Pancreas (tissue), 10 donors: ENCODE measurements at regions of chr6 and their contacts with region 1.

Region 1: DNA sequence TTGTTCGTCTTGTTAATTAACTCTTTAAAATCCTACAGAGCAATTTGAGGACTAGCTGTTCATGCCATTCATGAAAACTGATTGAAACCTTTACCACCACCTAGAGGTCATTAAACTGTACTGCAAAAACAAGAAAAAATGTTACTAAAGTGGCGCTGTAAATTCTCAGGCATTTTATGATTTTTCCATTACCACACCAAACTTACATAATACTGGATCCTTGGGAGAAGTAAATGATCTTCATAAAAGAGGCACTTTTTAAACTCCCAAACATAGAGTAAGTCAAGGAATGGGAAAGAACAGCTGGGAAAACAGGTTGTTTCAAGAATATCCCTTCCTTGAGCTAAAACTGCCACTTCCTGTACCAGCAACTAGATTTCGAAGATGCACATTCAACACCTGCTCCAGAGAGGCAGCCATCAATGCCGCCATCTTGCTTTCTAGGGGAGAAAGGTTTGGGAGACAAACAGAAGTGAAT is 54.3 kb downstream of the MYLIP start:
- DNase-seq: no peak
- ATAC-seq: peak; percentile 51 to 85 (median 82)
- H3K4me3 ChIP-seq: no peak overlapping the region
- H3K27ac ChIP-seq: no peak overlapping the region
- H3K4me1 ChIP-seq: no peaks in the 10 kb centered on the region
- H3K27me3 ChIP-seq: no peaks in the 10 kb centered on the region
- CTCF ChIP-seq: peak; percentile 34 to 63 (median 53)

Region 2: DNA sequence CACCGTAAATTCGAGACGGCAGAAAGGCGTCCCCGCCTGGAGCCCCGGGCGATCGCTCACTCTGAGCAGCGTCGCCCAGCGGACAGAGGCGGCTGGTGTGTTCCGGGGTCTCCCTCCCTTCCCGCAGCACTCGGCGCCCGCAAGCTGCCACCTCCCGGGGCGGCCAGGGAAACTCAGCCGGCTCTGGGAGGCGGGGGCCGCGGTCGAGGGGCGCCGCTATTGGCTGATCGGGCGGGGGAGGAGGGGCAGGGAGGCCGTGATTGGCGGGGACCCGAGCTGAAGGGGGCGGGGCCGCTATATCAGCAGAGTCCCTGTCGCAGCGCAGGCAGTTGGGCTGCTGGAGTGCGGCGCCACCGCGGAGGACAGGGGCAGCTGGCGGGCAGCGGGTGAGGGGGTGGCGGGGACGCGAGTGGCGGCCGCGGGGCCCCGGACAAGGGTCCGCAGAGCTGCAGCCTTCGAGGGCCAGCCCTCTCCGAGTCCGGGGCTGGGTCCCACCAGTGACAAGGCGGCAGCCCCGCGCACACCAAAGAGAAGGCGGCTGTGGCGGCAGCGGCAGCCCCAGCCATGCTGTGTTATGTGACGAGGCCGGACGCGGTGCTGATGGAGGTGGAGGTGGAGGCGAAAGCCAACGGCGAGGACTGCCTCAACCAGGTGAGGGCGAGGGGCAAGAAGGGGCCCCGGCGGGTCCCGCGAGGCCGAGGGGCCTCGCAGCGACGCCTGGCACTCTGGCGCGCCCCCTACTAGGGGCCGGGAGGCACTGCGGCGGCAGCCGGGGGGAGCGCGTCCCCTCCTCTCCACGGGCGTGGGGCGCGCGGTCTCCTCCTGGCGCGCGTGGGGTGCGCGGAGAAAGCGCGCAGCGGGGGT is 54.2 kb before region 1 on chr6 and contains the start of gene MYLIP:
- intact Hi-C with region 1: loop called in 1 of 3 experiments (anchors 10 kb)
- DNase-seq: peak; percentile 98 to 99 (median 98)
- ATAC-seq: peak; percentile 89 to 96 (median 94)
- H3K4me3 ChIP-seq: peak within 1 kb of the TSS; percentile 51 to 98 (median 95)
- H3K27ac ChIP-seq: peak within 1 kb of the TSS; percentile 88 to 98 (median 94)
- H3K4me1 ChIP-seq: peaks cover 19 to 26% (median 22%) of the 10 kb centered on the region in 3 donors
- H3K27me3 ChIP-seq: no peaks in the 10 kb centered on the region
- CTCF ChIP-seq: peak; percentile 29 to 73 (median 60)
- total RNA-seq, gene MYLIP: 10.5 to 20.2 (median 12.0) TPM